Gastrocnemius medialis (tissue), 4 donors: ENCODE measurements at regions of chr16 and their contacts with region 1.

Region 1: GRCh38 chr16:81885976-81886586 is 107.0 kb downstream of the PLCG2 start:
- DNase-seq: no peak
- ATAC-seq: no peak
- H3K4me3 ChIP-seq: no peak overlapping the region
- H3K27ac ChIP-seq: no peak overlapping the region
- H3K4me1 ChIP-seq: no peaks in the 10 kb centered on the region
- H3K27me3 ChIP-seq: no peaks in the 10 kb centered on the region
- CTCF ChIP-seq: peak in 3 of 5 experiments; percentile 19 to 41 (median 34)
- POLR2A ChIP-seq: no peak

Region 2: DNA sequence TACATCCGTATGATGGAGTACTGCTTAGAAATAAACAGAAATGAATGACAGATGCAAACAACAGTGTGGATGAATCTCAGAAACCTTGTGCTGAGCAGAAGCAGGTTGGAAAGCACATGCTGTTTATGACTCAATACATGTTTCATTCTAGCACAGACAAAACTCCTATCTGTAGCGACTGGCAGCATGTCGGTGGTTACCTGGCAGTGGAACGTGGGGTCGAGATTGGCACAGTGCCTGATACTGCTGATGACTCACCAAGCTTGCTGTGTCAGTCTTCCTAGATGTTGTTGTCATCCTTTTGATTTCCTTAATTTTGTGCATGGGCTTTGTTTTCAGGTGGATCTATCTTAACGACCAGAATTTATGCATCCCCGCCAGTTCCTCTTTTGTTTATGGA is 509.2 kb before region 1 on chr16:
- in situ Hi-C with region 1: loop called in 1 of 4 experiments (anchors 25 kb)
- intact Hi-C with region 1: no loop called
- DNase-seq: no peak
- ATAC-seq: no peak
- H3K4me3 ChIP-seq: no peak overlapping the region
- H3K27ac ChIP-seq: no peak overlapping the region
- H3K4me1 ChIP-seq: no peaks in the 10 kb centered on the region
- H3K27me3 ChIP-seq: no peaks in the 10 kb centered on the region
- CTCF ChIP-seq: no peak
- POLR2A ChIP-seq: no peak

Region 3: GRCh38 chr16:82105107-82105506 is 219.0 kb after region 1 on chr16:
- in situ Hi-C with region 1: no loop called
- intact Hi-C with region 1: no loop called
- DNase-seq: no peak
- ATAC-seq: no peak
- H3K4me3 ChIP-seq: no peak overlapping the region
- H3K27ac ChIP-seq: no peak overlapping the region
- H3K4me1 ChIP-seq: no peaks in the 10 kb centered on the region
- H3K27me3 ChIP-seq: no peaks in the 10 kb centered on the region
- CTCF ChIP-seq: no peak
- POLR2A ChIP-seq: no peak